RWPE1 (cell line): ENCODE measurements at regions of chr2 and their contacts with region 1.

Region 1: DNA sequence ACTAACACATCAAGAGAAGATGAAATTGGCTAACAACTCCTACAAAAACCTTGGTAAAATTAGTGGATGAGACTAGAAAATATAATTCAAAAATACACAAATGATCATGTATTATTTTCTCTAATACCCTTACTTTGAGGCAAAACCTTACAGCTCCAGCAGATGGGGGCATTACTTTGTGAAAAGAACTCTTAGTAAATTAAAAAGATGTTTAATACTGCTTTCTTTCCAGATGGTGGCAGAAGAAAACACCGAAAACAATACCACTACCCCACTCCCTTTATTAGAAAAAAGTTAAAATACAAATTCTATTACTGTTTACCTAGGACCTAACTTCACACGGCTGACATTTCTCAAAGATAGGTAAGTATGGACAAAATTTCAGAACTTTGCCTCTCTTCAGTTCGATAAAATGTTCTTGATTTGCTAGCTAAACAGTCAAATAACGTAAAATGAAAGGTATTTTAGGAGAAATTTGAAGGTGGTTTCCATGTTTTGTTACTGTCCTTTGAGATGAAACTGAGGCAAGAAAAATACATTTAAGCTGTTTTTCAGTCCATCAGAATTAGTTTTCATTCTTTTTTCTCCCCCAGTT is 30.6 kb downstream of the ORC4 start:
- DNase-seq: peak; percentile 67
- H3K27ac ChIP-seq: no peak overlapping the region
- CTCF ChIP-seq: peak; percentile 69

Region 2: GRCh38 chr2:147873859-147874483 is 115.9 kb before region 1 on chr2:
- CTCF ChIA-PET with region 1: no interaction called
- POLR2A ChIA-PET with region 1: no interaction called
- DNase-seq: no peak
- H3K27ac ChIP-seq: no peak overlapping the region
- CTCF ChIP-seq: no peak

Region 3: GRCh38 chr2:148067801-148068200 is 77.9 kb after region 1 on chr2:
- CTCF ChIA-PET with region 1: no interaction called
- POLR2A ChIA-PET with region 1: no interaction called
- DNase-seq: no peak
- H3K27ac ChIP-seq: no peak overlapping the region
- CTCF ChIP-seq: no peak

Region 4: DNA sequence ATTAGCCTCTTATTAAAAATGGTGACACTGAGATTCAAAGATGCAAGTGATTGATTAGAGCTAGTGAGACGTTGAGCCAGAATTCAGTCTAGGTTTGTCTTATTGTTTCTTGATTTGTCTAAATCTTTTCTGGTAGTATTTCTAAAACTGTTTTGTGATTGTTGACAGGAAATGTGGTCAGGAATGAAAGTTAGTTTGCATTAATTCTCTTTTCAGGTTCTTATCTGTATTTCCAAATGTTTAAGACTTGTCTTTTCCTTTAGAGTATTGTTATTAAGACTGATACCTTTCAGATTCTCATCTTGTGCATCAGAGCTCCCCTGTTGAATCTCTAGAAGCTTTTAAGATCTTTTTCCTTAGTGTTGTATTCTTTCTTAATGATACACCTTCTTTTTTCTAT is 120.3 kb after region 1 on chr2:
- CTCF ChIA-PET with region 1: no interaction called
- POLR2A ChIA-PET with region 1: no interaction called
- DNase-seq: no peak
- H3K27ac ChIP-seq: no peak overlapping the region
- CTCF ChIP-seq: no peak

Region 5: GRCh38 chr2:148509288-148509902 is 519.5 kb after region 1 on chr2:
- CTCF ChIA-PET with region 1: interaction called, 19 read pairs
- POLR2A ChIA-PET with region 1: no interaction called
- DNase-seq: peak; percentile 88
- H3K27ac ChIP-seq: no peak overlapping the region
- CTCF ChIP-seq: peak; percentile 87